ENCODE measurements at regions of chr2 and their contacts with region 1.

Region 1: DNA sequence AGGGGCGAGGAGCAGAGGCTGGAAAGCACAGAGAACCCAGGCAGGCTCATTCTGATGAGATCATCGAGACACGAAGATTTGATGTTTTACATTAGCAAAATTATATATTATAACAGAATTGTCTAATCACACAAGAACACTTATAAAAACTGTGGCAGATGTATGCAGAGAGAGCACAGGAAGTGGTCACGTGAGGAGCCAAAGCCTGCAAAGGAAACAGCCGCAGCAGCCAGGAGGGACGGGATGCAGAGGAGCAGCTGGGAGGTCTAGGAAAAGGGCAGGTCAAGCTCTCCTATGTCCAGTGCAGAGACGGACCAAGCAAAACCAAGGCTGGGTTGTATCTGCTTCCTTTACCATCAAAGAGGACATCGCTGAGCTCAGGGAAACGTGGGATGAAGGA is 355.1 kb upstream of the MYT1L start:
- DNase-seq: no peak
- ATAC-seq: no peak
- H3K4me3 ChIP-seq: no peak overlapping the region
- H3K27ac ChIP-seq: no peak overlapping the region
- H3K4me1 ChIP-seq: no peaks in the 10 kb centered on the region
- H3K27me3 ChIP-seq: peaks cover 5 to 62% of the 10 kb centered on the region in 2 experiments; a peak in 4 of 5 replicates
- CTCF ChIP-seq: no peak
- EP300 ChIP-seq: no peak
- POLR2A ChIP-seq: no peak
- RAD21 ChIP-seq: no peak

Region 2: DNA sequence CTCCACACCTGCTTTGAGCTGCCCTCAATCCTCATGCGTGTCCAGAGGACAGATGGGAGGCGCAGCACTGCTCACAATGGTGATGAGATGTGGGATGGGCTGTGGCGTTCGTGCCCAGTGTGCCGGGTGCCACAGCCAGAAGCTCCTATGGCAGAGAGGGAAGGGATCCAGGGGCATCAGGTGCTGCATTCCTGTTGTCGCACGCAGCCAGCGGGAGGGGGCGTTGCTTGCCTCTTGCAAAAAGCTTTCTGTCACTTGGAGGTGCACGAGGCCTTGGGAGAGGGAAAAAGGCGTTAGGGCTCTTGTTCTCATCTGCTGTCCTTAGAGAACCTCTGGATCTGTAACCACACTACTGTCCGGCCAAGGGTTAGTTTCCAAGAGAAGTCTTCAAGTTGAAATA is 942.6 kb after region 1 on chr2:
- CTCF ChIA-PET with region 1: no interaction called
- POLR2A ChIA-PET with region 1: no interaction called
- in situ Hi-C with region 1: no loop called
- intact Hi-C with region 1: loop called (anchors 5 kb)
- DNase-seq: peak; percentile 54
- ATAC-seq: peak; percentile 81
- H3K4me3 ChIP-seq: no peak overlapping the region
- H3K27ac ChIP-seq: no peak overlapping the region
- H3K4me1 ChIP-seq: peaks cover 16% of the 10 kb centered on the region
- H3K27me3 ChIP-seq: peaks cover 0 to 29% of the 10 kb centered on the region in 2 experiments; a peak in 3 of 5 replicates
- CTCF ChIP-seq: peak; percentile 81
- EP300 ChIP-seq: no peak
- POLR2A ChIP-seq: no peak
- RAD21 ChIP-seq: peak; percentile 35; the same call in 1 of the 2 replicates

Measured in HepG2 (cell line).